Panc1 (cell line): ENCODE measurements at regions of chr19 and their contacts with region 1.

Region 1: DNA sequence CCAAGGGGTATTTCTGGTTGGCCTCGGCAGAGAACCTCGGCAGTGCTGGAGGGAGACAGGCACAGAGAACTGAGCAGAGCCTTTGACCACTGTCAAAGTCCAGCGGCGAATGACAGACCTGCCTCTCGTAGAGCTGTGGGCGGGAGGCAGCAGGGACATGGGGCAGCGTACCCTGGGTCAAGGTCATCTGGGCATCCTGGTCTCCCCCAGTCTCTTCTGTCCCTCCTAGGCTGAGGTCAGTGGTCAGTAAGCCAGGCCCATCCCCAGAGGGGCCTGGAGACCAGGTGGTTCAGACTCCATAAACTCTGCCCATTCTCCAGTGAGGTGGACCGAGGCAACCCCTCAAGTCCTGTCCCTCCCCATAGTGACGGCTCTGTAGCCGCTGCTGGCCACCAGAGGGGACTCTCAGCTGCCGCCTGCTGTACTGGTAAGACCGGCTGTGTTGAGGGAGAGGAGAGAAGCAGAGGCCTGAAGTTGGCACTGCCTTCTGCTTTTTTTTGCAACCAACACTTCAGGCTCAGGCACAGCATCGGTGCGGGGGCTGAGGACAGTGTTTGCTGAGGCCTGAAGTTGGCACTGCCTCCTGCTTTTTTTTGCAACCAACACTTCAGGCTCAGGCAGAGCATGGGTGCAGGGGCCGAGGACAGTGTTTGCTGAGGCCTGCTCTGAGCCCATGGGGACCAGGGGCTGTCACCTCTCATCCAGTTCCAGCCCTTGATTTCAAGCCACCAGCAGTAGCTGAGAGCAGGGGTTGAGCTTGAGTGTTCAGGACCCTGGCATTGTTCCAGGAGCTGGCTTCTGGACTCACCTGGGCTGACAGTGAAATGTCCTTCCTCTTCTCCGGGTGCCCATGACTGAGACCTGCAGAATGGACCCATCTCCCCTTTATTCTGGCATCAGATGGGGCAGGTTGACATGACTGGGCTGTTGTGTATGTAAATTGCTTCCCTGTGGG is at the start of gene PGLYRP2:
- DNase-seq: no peak
- ATAC-seq: peak; percentile 88
- H3K4me3 ChIP-seq: no peak within 1 kb of the TSS
- H3K27ac ChIP-seq: no peak within 1 kb of the TSS
- H3K4me1 ChIP-seq: no peaks in the 10 kb centered on the region
- H3K27me3 ChIP-seq: no peaks in the 10 kb centered on the region
- CTCF ChIP-seq: no peak; the same call in none of the 2 replicates
- total RNA-seq, gene PGLYRP2: not detected

Region 2: GRCh38 chr19:15210323-15210781 is 269.3 kb before region 1 on chr19:
- CTCF ChIA-PET with region 1: interaction called, 18 read pairs
- POLR2A ChIA-PET with region 1: no interaction called
- in situ Hi-C with region 1: no loop called
- intact Hi-C with region 1: no loop called
- DNase-seq: no peak
- ATAC-seq: no peak
- H3K4me3 ChIP-seq: no peak overlapping the region
- H3K27ac ChIP-seq: no peak overlapping the region
- H3K4me1 ChIP-seq: no peaks in the 10 kb centered on the region
- H3K27me3 ChIP-seq: no peaks in the 10 kb centered on the region
- CTCF ChIP-seq: no peak

Region 3: DNA sequence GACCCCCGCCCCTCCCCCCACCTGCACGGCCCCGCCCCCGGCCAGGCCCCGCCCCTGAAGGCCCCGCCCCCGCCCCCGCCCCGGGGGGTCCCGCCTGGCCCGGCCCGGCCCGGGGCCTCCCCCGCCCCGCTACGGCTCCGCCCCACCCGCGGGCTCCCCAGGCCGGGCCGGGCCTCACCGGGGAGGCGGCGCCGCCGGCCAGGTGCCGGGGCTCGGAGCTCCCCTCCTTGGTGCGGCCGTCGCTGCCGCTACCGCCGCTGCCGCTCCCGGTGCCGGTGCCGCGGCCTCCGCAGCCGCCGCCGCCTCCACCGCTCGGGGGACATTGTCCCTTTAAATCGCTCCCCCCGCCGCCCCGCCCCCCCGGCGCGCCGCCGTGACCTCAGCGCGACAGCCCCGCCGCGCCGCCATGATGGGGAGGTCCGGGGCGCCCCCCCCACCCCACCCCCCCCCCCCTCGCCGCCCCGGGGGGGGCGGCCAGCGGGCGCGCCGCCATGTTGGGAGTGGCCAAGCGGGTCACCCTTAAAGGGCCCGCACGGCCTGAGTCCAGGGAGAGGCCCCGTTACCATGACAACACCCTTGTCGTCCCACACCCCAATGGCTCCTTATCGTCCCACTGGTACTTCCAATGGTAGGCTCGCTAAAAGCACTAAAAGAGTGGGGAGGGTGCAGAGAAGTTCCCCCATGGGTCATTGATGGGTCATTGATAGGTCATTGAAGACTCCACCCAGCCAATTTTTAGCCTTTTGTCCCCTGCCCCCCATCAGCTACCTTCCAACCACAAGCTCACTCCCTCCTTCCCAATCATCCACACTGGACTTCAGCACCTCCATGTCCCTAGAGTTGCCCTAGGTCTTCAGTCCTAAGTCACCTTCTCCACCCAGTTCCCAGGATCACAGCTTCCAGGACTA is 29.8 kb before region 1 on chr19 and contains the start of gene WIZ:
- CTCF ChIA-PET with region 1: no interaction called
- POLR2A ChIA-PET with region 1: no interaction called
- in situ Hi-C with region 1: no loop called
- intact Hi-C with region 1: no loop called
- DNase-seq: no peak
- ATAC-seq: peak; percentile 80
- H3K4me3 ChIP-seq: peak within 1 kb of the TSS; percentile 47 to 54
- H3K27ac ChIP-seq: 0 out of 2 replicates have a peak within 1 kb of the TSS, but pooled peaks have one; percentile 69
- H3K4me1 ChIP-seq: no peaks in the 10 kb centered on the region; the same call in 1 of the 2 replicates
- H3K27me3 ChIP-seq: no peaks in the 10 kb centered on the region
- CTCF ChIP-seq: no peak
- total RNA-seq, gene WIZ: 41.9 TPM

Region 4: DNA sequence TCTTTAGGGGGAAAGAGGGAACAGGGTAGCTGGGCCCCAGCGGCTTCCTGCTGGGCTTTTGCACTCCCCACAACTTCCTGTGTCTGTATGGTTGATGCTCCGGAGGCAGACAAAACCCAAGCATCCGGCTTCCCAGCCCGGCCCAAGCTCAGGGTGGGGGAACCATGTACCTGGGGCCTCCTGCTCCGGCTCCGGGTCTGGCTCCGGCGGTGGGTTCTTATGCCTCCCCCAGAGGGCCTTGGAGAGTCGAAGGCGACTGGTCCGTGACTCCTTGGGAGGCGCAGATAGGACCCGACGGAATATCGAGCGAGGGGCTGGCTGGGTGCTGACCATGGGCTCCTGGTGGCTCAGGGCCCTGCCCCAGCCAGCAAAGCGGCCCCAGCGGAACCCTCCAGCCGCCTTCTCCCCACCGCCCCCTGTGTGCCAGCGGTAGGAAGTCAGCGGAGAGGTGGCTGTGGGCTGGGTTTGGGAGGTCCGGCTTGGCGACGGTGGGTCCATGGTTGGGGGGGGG is 15.8 kb before region 1 on chr19:
- CTCF ChIA-PET with region 1: no interaction called
- POLR2A ChIA-PET with region 1: no interaction called
- in situ Hi-C with region 1: no loop called
- intact Hi-C with region 1: no loop called
- DNase-seq: no peak
- ATAC-seq: no peak
- H3K4me3 ChIP-seq: no peak overlapping the region
- H3K27ac ChIP-seq: no peak overlapping the region
- H3K4me1 ChIP-seq: no peaks in the 10 kb centered on the region
- H3K27me3 ChIP-seq: no peaks in the 10 kb centered on the region
- CTCF ChIP-seq: no peak

Region 5: GRCh38 chr19:15555759-15556633 is 76.3 kb after region 1 on chr19:
- CTCF ChIA-PET with region 1: interaction called, 6 read pairs
- POLR2A ChIA-PET with region 1: no interaction called
- in situ Hi-C with region 1: no loop called
- intact Hi-C with region 1: loop called (anchors 10 kb)
- DNase-seq: peak; percentile 73
- ATAC-seq: peak; percentile 96
- H3K4me3 ChIP-seq: peak overlapping the region; percentile 35 to 65
- H3K27ac ChIP-seq: no peak overlapping the region
- H3K4me1 ChIP-seq: no peaks in the 10 kb centered on the region
- H3K27me3 ChIP-seq: no peaks in the 10 kb centered on the region; the same call in 1 of the 2 replicates
- CTCF ChIP-seq: peak; percentile 87